Prostate gland (tissue), 2 donors: ENCODE measurements at regions of chr19 and their contacts with region 1.

Region 1: GRCh38 chr19:47243776-47244547 is 12.4 kb upstream of the CCDC9 start:
- DNase-seq: peak; percentile 79
- H3K4me3 ChIP-seq: peak overlapping the region; percentile 2 to 17
- H3K27ac ChIP-seq: peak overlapping the region; percentile 38 to 43
- H3K4me1 ChIP-seq: no peaks in the 10 kb centered on the region
- H3K27me3 ChIP-seq: no peaks in the 10 kb centered on the region
- CTCF ChIP-seq: peak; percentile 94 to 99 (median 98)
- POLR2A ChIP-seq: peak; percentile 24

Region 2: GRCh38 chr19:47013041-47013517 is 230.9 kb before region 1 on chr19:
- intact Hi-C with region 1: no loop called
- DNase-seq: peak; percentile 65
- H3K4me3 ChIP-seq: no peak overlapping the region
- H3K27ac ChIP-seq: no peak overlapping the region
- H3K4me1 ChIP-seq: no peaks in the 10 kb centered on the region
- H3K27me3 ChIP-seq: no peaks in the 10 kb centered on the region
- CTCF ChIP-seq: peak; percentile 94 to 97 (median 96)
- POLR2A ChIP-seq: no peak

Region 3: GRCh38 chr19:47152224-47153017 is 91.5 kb before region 1 on chr19:
- intact Hi-C with region 1: loop called (anchors 1 kb)
- DNase-seq: peak; percentile 83
- H3K4me3 ChIP-seq: no peak overlapping the region
- H3K27ac ChIP-seq: peak overlapping the region; percentile 52
- H3K4me1 ChIP-seq: peaks cover 6% of the 10 kb centered on the region
- H3K27me3 ChIP-seq: no peaks in the 10 kb centered on the region
- CTCF ChIP-seq: no peak
- POLR2A ChIP-seq: no peak

Region 4: DNA sequence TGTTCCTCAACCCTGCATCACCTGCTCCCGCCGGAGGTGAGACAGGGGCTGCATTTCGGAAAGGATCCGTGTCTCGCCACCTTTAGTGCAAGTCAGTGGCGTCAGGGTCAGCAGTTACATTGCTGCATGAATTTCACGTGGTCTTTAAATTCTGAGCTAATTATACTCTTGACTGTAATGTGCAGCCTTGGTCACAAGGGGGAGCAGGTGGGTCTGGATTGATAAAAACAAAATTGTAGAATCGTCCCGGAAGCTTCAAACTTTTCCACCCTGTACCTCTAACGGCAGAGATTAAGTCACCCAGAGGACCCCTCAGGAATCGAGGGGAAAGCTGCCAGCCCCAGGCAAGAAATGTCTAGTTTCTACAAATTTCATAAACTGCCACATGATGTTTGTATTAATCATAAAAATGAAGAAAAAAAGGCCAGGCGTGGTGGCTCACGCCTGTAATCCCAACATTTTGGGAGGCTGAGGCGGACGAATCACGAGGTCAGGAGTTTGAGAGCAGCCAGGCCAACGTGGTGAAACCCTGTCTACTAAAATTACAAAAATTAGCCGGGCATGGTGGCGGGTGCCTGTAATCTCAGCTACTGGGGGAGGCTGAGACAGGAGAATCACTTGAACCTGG is 33.2 kb before region 1 on chr19:
- intact Hi-C with region 1: loop called (anchors 2 kb)
- DNase-seq: peak; percentile 78
- H3K4me3 ChIP-seq: no peak overlapping the region
- H3K27ac ChIP-seq: peak overlapping the region in 1 of 2 donors; percentile 53
- H3K4me1 ChIP-seq: no peaks in the 10 kb centered on the region
- H3K27me3 ChIP-seq: no peaks in the 10 kb centered on the region
- CTCF ChIP-seq: peak; percentile 44 to 87 (median 84)
- POLR2A ChIP-seq: no peak

Region 5: DNA sequence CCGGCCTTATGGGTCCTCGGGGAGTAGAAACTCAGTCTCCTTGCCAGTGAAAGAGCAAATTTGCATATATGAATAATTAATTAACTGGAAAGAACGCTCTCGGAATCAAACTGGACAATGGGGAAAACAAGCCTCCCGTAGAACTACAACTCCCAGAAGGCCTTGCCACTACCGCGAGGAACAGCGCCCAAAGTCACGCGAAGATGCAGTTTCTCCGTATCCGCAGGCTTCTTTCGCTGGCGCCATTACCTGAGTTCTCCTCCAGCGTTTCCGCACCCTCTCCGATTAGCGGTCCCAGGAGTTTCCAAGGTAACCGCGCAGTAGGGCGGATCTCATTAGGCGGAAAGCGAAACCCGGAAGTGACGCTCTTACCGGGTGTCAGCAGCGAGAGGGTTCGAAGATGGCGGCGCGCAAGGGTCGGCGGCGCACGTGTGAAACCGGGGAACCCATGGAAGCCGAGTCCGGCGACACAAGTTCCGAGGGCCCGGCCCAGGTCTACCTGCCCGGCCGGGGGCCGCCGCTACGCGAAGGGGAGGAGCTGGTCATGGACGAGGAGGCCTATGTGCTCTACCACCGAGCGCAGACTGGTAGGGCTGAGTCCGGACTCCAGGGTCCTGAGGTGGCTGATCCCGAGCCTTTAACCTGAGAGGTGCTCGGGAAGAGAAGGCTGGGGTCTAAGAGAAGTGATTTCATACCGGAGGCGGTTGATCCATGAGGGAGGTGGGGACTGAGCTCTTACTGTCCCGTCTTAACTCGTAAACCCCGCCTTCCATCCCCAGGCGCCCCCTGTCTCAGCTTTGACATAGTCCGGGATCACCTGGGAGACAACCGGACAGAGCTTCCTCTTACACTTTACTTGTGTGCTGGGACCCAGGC is 1201.9 kb after region 1 on chr19 and contains the start of gene GRWD1:
- intact Hi-C with region 1: no loop called
- DNase-seq: peak; percentile 92
- H3K4me3 ChIP-seq: peak within 1 kb of the TSS; percentile 82 to 93
- H3K27ac ChIP-seq: peak within 1 kb of the TSS; percentile 83 to 94
- H3K4me1 ChIP-seq: peaks cover 4% of the 10 kb centered on the region
- H3K27me3 ChIP-seq: no peaks in the 10 kb centered on the region
- CTCF ChIP-seq: peak in 2 of 4 experiments; percentile 3 to 11
- POLR2A ChIP-seq: peak; percentile 35
- total RNA-seq, gene GRWD1: 26.2 to 39.7 TPM